ENCODE measurements at regions of chr1 and their contacts with region 1.

Region 1: GRCh38 chr1:178031856-178032320 is 62.0 kb upstream of the RASAL2 start:
- DNase-seq: peak; percentile 80
- ATAC-seq: peak; percentile 96
- H3K4me3 Mint-ChIP-seq: no peak overlapping the region
- H3K27ac Mint-ChIP-seq: no peak overlapping the region
- H3K4me1 Mint-ChIP-seq: peaks cover 12% of the 10 kb centered on the region
- H3K27me3 Mint-ChIP-seq: no peaks in the 10 kb centered on the region
- CTCF ChIP-seq: peak; percentile 84

Region 2: GRCh38 chr1:177732178-177732577 is 299.7 kb before region 1 on chr1:
- CTCF ChIA-PET with region 1: no interaction called
- POLR2A ChIA-PET with region 1: no interaction called
- DNase-seq: no peak
- ATAC-seq: no peak
- H3K4me3 Mint-ChIP-seq: no peak overlapping the region
- H3K27ac Mint-ChIP-seq: no peak overlapping the region
- H3K4me1 Mint-ChIP-seq: no peaks in the 10 kb centered on the region
- H3K27me3 Mint-ChIP-seq: no peaks in the 10 kb centered on the region; the same call in 1 of the 2 replicates
- CTCF ChIP-seq: no peak

Region 3: GRCh38 chr1:178020968-178021640 is 10.8 kb before region 1 on chr1:
- CTCF ChIA-PET with region 1: interaction called, 15 read pairs
- POLR2A ChIA-PET with region 1: no interaction called
- DNase-seq: no peak
- ATAC-seq: no peak
- H3K4me3 Mint-ChIP-seq: no peak overlapping the region
- H3K27ac Mint-ChIP-seq: no peak overlapping the region
- H3K4me1 Mint-ChIP-seq: no peaks in the 10 kb centered on the region
- H3K27me3 Mint-ChIP-seq: no peaks in the 10 kb centered on the region; the same call in 1 of the 2 replicates
- CTCF ChIP-seq: no peak

Region 4: GRCh38 chr1:178093205-178093957 is 61.5 kb after region 1 on chr1:
- CTCF ChIA-PET with region 1: interaction called, 18 read pairs
- POLR2A ChIA-PET with region 1: no interaction called
- DNase-seq: peak; percentile 95
- ATAC-seq: peak; percentile 88
- H3K4me3 Mint-ChIP-seq: peak overlapping the region; percentile 81
- H3K27ac Mint-ChIP-seq: peak overlapping the region; percentile 93
- H3K4me1 Mint-ChIP-seq: peaks cover 45% of the 10 kb centered on the region
- H3K27me3 Mint-ChIP-seq: no peaks in the 10 kb centered on the region
- CTCF ChIP-seq: no peak

Region 5: GRCh38 chr1:178189814-178190213 is 157.9 kb after region 1 on chr1:
- CTCF ChIA-PET with region 1: interaction called, 28 read pairs
- POLR2A ChIA-PET with region 1: no interaction called
- DNase-seq: peak; percentile 66
- ATAC-seq: peak; percentile 99
- H3K4me3 Mint-ChIP-seq: no peak overlapping the region
- H3K27ac Mint-ChIP-seq: no peak overlapping the region
- H3K4me1 Mint-ChIP-seq: peaks cover 21% of the 10 kb centered on the region
- H3K27me3 Mint-ChIP-seq: no peaks in the 10 kb centered on the region
- CTCF ChIP-seq: peak; percentile 24; the same call in 1 of the 2 replicates